ENCODE measurements at regions of chr20 and their contacts with region 1.

Region 1: DNA sequence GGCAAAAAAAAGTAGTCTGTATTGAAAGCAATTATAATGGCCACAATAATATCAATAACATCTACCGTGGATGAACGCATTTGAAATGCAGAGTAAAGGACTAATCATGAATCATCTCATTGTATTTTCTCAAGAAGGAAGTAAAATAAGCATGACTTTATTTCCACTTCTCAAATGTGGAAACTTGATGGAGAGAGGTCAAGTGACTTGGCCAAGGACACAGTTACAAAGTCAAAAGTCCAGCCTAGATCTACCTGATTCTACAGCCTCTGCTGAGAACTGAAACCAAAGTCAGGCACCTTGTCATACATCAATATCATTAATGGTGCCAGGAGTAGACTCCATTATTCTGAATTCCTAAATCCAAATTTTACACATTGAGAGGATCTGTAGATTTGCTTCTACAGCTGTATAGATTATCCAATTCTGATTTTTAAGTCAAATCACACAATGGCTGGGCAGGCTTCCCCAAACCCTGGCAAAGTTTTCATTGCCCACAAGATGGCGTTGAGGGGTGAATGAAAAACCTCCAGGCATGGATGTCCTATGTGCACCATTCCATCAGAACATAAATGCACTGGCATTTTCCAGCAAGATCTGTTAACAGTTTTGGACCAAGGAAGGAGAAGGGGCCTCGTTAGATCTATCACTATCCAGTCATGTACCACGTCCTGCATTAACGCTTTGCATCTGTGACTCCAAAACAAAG is 423.1 kb downstream of the MAFB start:
- DNase-seq: peak; percentile 35
- H3K4me3 ChIP-seq: no peak overlapping the region; a peak in 1 of 4 replicates
- H3K27ac ChIP-seq: no peak overlapping the region
- H3K4me1 ChIP-seq: peaks cover 0 to 4% of the 10 kb centered on the region in 2 experiments; a peak in 2 of 4 replicates
- H3K27me3 ChIP-seq: no peaks in the 10 kb centered on the region
- CTCF ChIP-seq: peak; percentile 57
- EP300 ChIP-seq: no peak
- RAD21 ChIP-seq: peak; percentile 77

Region 2: DNA sequence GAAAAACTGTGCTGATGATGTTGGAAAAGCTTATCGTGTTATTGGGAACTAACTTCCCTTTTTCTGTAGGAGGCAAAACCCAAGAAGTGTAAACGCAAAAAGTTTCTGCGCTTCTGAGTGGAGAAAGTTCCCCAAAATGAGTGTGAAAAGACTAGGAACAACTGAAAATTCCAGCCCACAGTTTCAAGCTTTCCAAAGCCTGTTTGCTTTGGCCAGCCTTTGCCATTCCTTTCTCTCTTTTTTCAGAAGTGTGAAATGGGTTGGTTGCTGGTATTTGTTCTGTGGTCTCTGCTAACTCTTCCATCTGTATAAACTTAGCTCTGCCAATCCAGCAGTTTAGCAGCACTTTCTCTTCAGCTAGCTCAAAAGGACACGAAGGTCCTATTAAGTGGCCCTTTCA is 68.3 kb before region 1 on chr20:
- CTCF ChIA-PET with region 1: no interaction called
- POLR2A ChIA-PET with region 1: no interaction called
- DNase-seq: no peak
- H3K4me3 ChIP-seq: no peak overlapping the region
- H3K27ac ChIP-seq: no peak overlapping the region
- H3K4me1 ChIP-seq: no peaks in the 10 kb centered on the region
- H3K27me3 ChIP-seq: no peaks in the 10 kb centered on the region
- CTCF ChIP-seq: no peak
- EP300 ChIP-seq: no peak
- RAD21 ChIP-seq: no peak

Region 3: DNA sequence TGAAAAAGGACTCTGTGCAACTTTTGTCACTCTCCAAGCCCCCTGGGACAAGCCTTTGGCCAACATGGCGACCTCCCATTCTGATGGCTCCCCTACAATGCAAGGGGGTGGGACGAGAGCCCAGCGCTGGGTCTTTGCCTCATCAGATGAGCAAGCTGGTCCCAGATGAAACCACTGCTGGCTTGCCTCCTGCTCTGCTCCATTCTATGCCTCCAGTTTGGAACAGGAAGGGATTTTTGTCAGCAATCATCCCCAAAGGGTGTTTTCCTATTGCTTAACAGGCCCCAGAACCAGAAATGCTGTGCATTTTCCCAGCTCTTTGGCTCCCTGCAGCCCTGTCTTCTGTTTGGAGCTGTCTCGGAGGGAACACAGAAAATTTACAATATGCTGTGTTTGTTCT is 10.3 kb after region 1 on chr20:
- CTCF ChIA-PET with region 1: interaction called, 11 read pairs
- POLR2A ChIA-PET with region 1: no interaction called
- DNase-seq: no peak
- H3K4me3 ChIP-seq: no peak overlapping the region
- H3K27ac ChIP-seq: peak overlapping the region in 1 of 2 experiments; percentile 90; a peak in 1 of 4 replicates
- H3K4me1 ChIP-seq: peaks cover 13 to 28% of the 10 kb centered on the region in 2 experiments; a peak in 3 of 4 replicates
- H3K27me3 ChIP-seq: no peaks in the 10 kb centered on the region
- CTCF ChIP-seq: no peak
- EP300 ChIP-seq: no peak
- RAD21 ChIP-seq: no peak

Measured in SK-N-SH (cell line).